CD8-positive, alpha-beta memory T cell (primary cell): ENCODE measurements at regions of chr1 and their contacts with region 1.

Region 1: GRCh38 chr1:41812051-41812450 is 106.7 kb downstream of the HIVEP3 start:
- DNase-seq: peak in 4 of 5 donors; percentile 14 to 60 (median 27)
- H3K4me3 ChIP-seq: no peak overlapping the region
- H3K4me3 Mint-ChIP-seq: peak overlapping the region in 2 of 7 donors; percentile 31 to 84
- H3K27ac ChIP-seq: no peak overlapping the region
- H3K27ac Mint-ChIP-seq: peak overlapping the region in 4 of 8 donors; percentile 49 to 76 (median 62)
- H3K4me1 ChIP-seq: peaks cover 28% of the 10 kb centered on the region
- H3K4me1 Mint-ChIP-seq: peaks cover 34 to 45% (median 42%) of the 10 kb centered on the region in 3 donors
- H3K27me3 ChIP-seq: no peaks in the 10 kb centered on the region
- H3K27me3 Mint-ChIP-seq: no peaks in the 10 kb centered on the region

Region 2: DNA sequence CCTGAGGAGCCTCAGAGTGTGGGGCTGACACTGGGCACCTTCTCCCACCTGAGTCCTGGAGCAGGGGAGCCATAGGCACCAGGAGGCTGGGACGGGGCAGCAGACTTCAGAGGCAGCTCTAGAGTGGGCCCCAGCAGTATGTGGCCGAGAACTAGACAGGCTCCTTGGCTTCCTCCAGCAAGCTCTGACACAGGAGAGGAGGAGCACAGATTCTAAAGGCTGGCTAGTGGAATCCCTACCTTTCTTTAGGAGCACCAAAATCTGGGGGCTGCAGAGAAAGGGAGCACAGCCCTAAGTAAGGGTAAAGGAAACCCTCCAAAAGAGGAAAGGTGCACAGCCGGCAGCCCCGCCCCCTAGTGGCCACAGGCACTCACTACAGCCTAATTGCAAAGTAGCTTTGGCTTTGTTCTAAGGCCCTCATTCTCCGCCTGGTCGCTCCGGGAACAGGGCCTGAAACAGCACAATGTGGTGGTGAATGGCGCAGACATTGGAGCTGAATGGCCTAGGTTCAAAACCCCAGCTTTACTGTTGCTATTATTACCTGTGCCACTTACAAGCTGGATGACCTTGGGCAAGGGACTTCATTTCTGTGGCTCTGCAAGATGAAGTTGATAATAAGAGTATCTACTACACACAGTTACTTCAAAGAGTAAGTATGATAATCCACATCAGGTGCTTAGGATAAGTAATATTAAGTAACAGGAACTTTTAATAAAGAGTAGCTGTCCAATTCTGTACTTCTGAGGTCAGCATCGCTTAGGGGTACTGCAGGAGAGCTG is 361.3 kb after region 1 on chr1:
- CTCF ChIA-PET with region 1: interaction called, 11 read pairs
- POLR2A ChIA-PET with region 1: no interaction called
- DNase-seq: peak; percentile 46 to 75 (median 51)
- H3K4me3 ChIP-seq: no peak overlapping the region
- H3K4me3 Mint-ChIP-seq: no peak overlapping the region
- H3K27ac ChIP-seq: no peak overlapping the region
- H3K27ac Mint-ChIP-seq: peak overlapping the region in 2 of 8 donors; percentile 51 to 72
- H3K4me1 ChIP-seq: no peaks in the 10 kb centered on the region
- H3K4me1 Mint-ChIP-seq: peaks cover 0 to 2% (median 0%) of the 10 kb centered on the region in 3 donors
- H3K27me3 ChIP-seq: no peaks in the 10 kb centered on the region
- H3K27me3 Mint-ChIP-seq: peaks cover 3 to 4% of the 10 kb centered on the region in 2 donors